MCF 10A (cell line): ENCODE measurements at regions of chr1 and their contacts with region 1.

Region 1: GRCh38 chr1:210185063-210185462 is 47.5 kb upstream of the SERTAD4 start:
- DNase-seq: no peak
- H3K4me3 Mint-ChIP-seq: no peak overlapping the region
- H3K27ac Mint-ChIP-seq: no peak overlapping the region
- H3K4me1 Mint-ChIP-seq: no peaks in the 10 kb centered on the region
- H3K27me3 Mint-ChIP-seq: peaks cover 8% of the 10 kb centered on the region
- CTCF ChIP-seq: no peak

Region 2: DNA sequence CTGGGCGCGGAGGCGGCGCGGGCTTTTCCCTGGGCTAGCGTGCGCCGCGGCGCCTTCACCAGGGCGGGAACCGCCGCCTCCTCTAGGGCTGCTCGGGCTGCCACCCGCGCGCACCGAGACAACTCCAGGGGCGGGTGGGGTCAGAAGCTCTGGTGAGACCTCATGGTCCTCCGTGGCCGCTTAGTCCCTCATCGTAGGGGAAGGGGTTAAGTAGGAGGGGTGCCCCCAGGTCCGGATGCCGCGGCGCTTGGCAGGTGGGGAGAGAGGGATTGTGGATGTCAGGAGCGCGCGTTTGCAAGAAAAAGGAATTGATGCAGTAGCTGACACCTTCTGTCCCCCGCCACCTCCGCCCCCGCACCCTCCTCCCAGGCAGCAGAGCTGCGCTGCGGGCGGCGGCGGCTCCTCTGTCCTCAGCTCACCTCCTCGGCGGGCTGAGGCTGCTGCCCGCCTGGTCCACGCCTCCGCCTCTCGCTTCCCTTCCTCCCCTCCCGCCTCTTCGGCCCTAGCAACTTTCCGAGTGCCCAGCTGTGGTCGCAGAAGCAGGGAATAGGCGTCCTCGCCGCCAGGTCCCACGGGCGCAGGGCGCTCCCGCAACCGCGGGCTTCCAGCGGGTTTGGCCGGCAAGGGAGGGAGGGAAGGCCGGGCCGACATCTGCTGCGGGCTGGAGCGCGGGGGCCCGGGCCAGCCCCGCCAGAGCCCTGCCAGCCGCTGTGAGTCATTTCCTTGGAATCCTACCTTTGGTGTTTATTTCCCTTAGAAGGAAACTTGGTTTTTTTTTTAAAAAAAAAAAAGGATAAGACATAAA is 48.4 kb after region 1 on chr1:
- CTCF ChIA-PET with region 1: interaction called, 3 read pairs
- POLR2A ChIA-PET with region 1: interaction called, 3 read pairs
- intact Hi-C with region 1: loop called (anchors 2 kb)
- DNase-seq: peak; percentile 89
- H3K4me3 Mint-ChIP-seq: peak overlapping the region; percentile 69
- H3K27ac Mint-ChIP-seq: no peak overlapping the region
- H3K4me1 Mint-ChIP-seq: peaks cover 17% of the 10 kb centered on the region
- H3K27me3 Mint-ChIP-seq: no peaks in the 10 kb centered on the region
- CTCF ChIP-seq: no peak

Region 3: DNA sequence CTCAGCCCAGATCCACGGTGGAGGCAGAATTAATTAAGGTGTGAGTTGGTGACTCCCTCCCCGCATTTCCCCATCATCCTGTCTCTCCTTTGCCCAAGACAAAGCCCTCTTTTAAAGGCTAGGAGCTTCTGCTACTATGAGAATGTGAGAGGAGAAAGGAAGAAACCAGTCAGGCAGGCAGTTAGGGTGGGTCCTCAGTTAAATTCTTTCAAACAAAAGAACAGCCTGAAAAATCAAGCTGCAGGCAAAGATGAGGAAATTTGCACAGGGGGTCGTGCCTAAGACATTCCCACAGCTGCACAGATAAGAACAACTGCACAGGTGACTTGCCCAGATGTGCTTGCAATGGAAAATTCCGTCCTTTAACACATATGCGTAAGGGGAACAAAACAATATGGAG is 95.2 kb after region 1 on chr1:
- CTCF ChIA-PET with region 1: no interaction called
- POLR2A ChIA-PET with region 1: no interaction called
- intact Hi-C with region 1: no loop called
- DNase-seq: no peak
- H3K4me3 Mint-ChIP-seq: no peak overlapping the region
- H3K27ac Mint-ChIP-seq: no peak overlapping the region
- H3K4me1 Mint-ChIP-seq: no peaks in the 10 kb centered on the region
- H3K27me3 Mint-ChIP-seq: peaks cover 34% of the 10 kb centered on the region
- CTCF ChIP-seq: no peak